A549 (cell line): ENCODE measurements at regions of chr1 and their contacts with region 1.

Region 1: DNA sequence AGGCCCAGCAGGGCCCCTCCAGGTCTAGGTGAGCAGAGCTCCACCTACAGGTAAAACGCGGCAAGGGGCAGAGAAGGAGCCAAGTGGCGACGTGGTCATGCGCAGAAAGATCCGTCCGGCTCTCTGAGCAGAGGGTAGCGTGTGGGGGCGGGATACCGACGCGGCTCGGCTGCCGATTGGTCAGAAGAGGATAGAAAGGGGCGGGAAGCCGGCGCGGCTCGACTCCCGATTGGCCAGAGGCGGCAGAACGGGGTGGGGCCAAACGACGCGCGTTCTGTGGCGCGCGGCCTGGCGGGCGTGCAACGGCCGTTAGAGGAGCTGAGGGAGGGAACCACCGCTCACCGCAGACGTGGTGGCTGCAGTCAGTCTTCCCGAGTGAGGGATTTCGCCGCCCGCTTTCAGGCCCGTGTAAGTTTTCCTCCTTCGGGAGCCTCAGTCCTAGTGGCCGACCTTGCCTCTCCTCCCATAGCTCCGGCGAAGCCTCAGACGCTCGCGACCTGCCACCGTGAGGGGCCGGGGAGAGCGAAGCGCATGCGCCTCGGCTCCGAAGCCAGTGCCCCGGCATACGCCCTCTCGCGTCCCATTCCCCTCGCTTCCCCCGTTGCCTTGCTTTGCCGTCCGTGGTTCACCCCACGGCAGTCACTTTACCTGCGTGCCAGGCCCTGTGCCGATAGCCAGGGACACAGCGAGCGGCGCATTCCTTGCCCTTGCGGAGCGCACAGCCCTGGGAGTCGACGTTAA is at the start of gene CEP85:
- DNase-seq: peak; percentile 96 to 97
- ATAC-seq: peak; percentile 94 to 97
- H3K4me3 ChIP-seq: peak within 1 kb of the TSS; percentile 69
- H3K27ac ChIP-seq: peak within 1 kb of the TSS; percentile 77 to 92
- H3K4me1 ChIP-seq: peaks cover 43% of the 10 kb centered on the region
- CTCF ChIP-seq: peak; percentile 64
- EP300 ChIP-seq: no peak
- POLR2A ChIP-seq: peak; percentile 79
- RAD21 ChIP-seq: peak; percentile 57 to 59
- polyA plus RNA-seq, gene CEP85: 21.1 and 25.6 TPM in 2 replicates

Region 2: GRCh38 chr1:26169669-26170471 is 64.2 kb before region 1 on chr1 and contains the start of gene ZNF593:
- CTCF ChIA-PET with region 1: interaction called, 33 read pairs
- POLR2A ChIA-PET with region 1: interaction called, 15 read pairs
- DNase-seq: peak; percentile 85 to 91
- ATAC-seq: peak; percentile 91 to 96
- H3K4me3 ChIP-seq: peak within 1 kb of the TSS; percentile 95
- H3K27ac ChIP-seq: peak within 1 kb of the TSS; percentile 90 to 99
- H3K4me1 ChIP-seq: peaks cover 7% of the 10 kb centered on the region; the same call in 2 of the 3 replicates
- CTCF ChIP-seq: peak; percentile 77
- EP300 ChIP-seq: no peak
- POLR2A ChIP-seq: peak; percentile 81
- RAD21 ChIP-seq: peak; percentile 17 to 48; a peak in 4 of 5 replicates
- polyA plus RNA-seq, gene ZNF593: 25.6 and 27.2 TPM in 2 replicates

Region 3: DNA sequence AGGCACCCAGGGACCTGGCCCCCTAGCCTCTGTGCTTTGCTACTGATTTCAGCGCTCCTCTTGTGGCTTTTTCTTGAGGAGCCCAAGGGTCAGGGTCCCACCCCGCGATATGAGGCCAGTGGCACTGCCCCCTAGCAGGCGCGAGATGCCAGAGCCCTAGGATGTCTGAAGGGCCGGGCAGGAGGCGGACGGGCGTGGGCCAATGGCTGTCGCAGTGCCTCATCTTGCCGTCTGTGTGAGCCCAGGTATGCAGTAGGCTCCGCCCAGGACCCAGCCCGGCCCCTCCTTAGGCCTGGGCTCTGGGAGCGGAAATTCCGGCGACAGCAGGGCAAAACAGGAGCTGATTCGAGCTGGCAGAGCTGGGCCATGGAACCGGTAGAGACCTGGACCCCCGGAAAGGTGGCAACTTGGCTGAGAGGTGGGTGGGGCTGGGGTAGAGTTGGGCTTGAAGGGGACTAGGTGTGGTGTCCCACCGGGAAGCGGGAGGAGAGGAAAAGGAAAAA is 56.8 kb before region 1 on chr1 and contains the start of gene CNKSR1:
- CTCF ChIA-PET with region 1: interaction called, 17 read pairs
- POLR2A ChIA-PET with region 1: interaction called, 3 read pairs
- DNase-seq: no peak
- ATAC-seq: no peak; a peak in 1 of 6 replicates
- H3K4me3 ChIP-seq: no peak within 1 kb of the TSS
- H3K27ac ChIP-seq: no peak within 1 kb of the TSS
- H3K4me1 ChIP-seq: no peaks in the 10 kb centered on the region
- CTCF ChIP-seq: no peak
- EP300 ChIP-seq: no peak
- POLR2A ChIP-seq: no peak
- RAD21 ChIP-seq: no peak
- polyA plus RNA-seq, gene CNKSR1: 0.32 and 0.60 TPM in 2 replicates

Region 4: GRCh38 chr1:26190373-26190987 is 43.6 kb before region 1 on chr1 and contains the start of gene CATSPER4:
- CTCF ChIA-PET with region 1: interaction called, 15 read pairs
- POLR2A ChIA-PET with region 1: interaction called, 3 read pairs
- DNase-seq: peak; percentile 44 to 57
- ATAC-seq: peak; percentile 62 to 81; a peak in 5 of 6 replicates
- H3K4me3 ChIP-seq: no peak within 1 kb of the TSS
- H3K27ac ChIP-seq: no peak within 1 kb of the TSS
- H3K4me1 ChIP-seq: no peaks in the 10 kb centered on the region
- CTCF ChIP-seq: no peak
- EP300 ChIP-seq: no peak
- POLR2A ChIP-seq: no peak
- RAD21 ChIP-seq: peak in 1 of 2 experiments; percentile 31; a peak in 1 of 5 replicates
- polyA plus RNA-seq, gene CATSPER4: not detected in 2 replicates

Region 5: GRCh38 chr1:26218906-26219494 is 15.1 kb before region 1 on chr1:
- CTCF ChIA-PET with region 1: interaction called, 17 read pairs
- POLR2A ChIA-PET with region 1: interaction called, 6 read pairs
- DNase-seq: no peak
- ATAC-seq: peak; percentile 47 to 51; a peak in 4 of 6 replicates
- H3K4me3 ChIP-seq: no peak overlapping the region
- H3K27ac ChIP-seq: no peak overlapping the region
- H3K4me1 ChIP-seq: peaks cover 17% of the 10 kb centered on the region; the same call in 2 of the 3 replicates
- CTCF ChIP-seq: no peak
- EP300 ChIP-seq: no peak
- POLR2A ChIP-seq: no peak
- RAD21 ChIP-seq: no peak

Region 6: GRCh38 chr1:26254404-26254803 is 20.3 kb after region 1 on chr1:
- CTCF ChIA-PET with region 1: interaction called, 14 read pairs
- POLR2A ChIA-PET with region 1: no interaction called
- DNase-seq: no peak
- ATAC-seq: no peak
- H3K4me3 ChIP-seq: no peak overlapping the region
- H3K27ac ChIP-seq: no peak overlapping the region
- H3K4me1 ChIP-seq: no peaks in the 10 kb centered on the region
- CTCF ChIP-seq: no peak
- EP300 ChIP-seq: no peak
- POLR2A ChIP-seq: no peak
- RAD21 ChIP-seq: no peak

Region 7: GRCh38 chr1:26284597-26285360 is 50.7 kb after region 1 on chr1:
- CTCF ChIA-PET with region 1: interaction called, 11 read pairs
- POLR2A ChIA-PET with region 1: interaction called, 6 read pairs
- DNase-seq: peak; percentile 64
- ATAC-seq: peak; percentile 67 to 82
- H3K4me3 ChIP-seq: no peak overlapping the region
- H3K27ac ChIP-seq: peak overlapping the region in 1 of 2 experiments; percentile 64; a peak in 3 of 6 replicates
- H3K4me1 ChIP-seq: peaks cover 23% of the 10 kb centered on the region
- CTCF ChIP-seq: peak; percentile 63
- EP300 ChIP-seq: no peak
- POLR2A ChIP-seq: no peak
- RAD21 ChIP-seq: peak; percentile 69

Region 8: GRCh38 chr1:26754086-26754874 is 520.2 kb after region 1 on chr1:
- CTCF ChIA-PET with region 1: no interaction called
- POLR2A ChIA-PET with region 1: no interaction called
- DNase-seq: no peak
- ATAC-seq: no peak
- H3K4me3 ChIP-seq: no peak overlapping the region
- H3K27ac ChIP-seq: no peak overlapping the region
- H3K4me1 ChIP-seq: no peaks in the 10 kb centered on the region
- CTCF ChIP-seq: no peak
- EP300 ChIP-seq: no peak
- POLR2A ChIP-seq: no peak
- RAD21 ChIP-seq: no peak